Activated CD4-positive, alpha-beta memory T cell treated with anti-CD3 and anti-CD28 coated beads for 36 hours (primary cell): ENCODE measurements at regions of chr12 and their contacts with region 1.

Region 1: GRCh38 chr12:52069327-52070184 is at the start of gene ATG101:
- DNase-seq: peak; percentile 91
- H3K4me3 Mint-ChIP-seq: peak within 1 kb of the TSS; percentile 91
- H3K27ac Mint-ChIP-seq: peak within 1 kb of the TSS; percentile 98
- H3K4me1 Mint-ChIP-seq: peaks cover 47% of the 10 kb centered on the region
- H3K27me3 Mint-ChIP-seq: no peaks in the 10 kb centered on the region
- total RNA-seq, gene ATG101: 35.7 to 38.0 TPM

Region 2: GRCh38 chr12:52013626-52014310 is 55.8 kb before region 1 on chr12:
- CTCF ChIA-PET with region 1: no interaction called
- POLR2A ChIA-PET with region 1: no interaction called
- intact Hi-C with region 1: no loop called
- DNase-seq: no peak
- H3K4me3 Mint-ChIP-seq: no peak overlapping the region
- H3K27ac Mint-ChIP-seq: no peak overlapping the region
- H3K4me1 Mint-ChIP-seq: no peaks in the 10 kb centered on the region
- H3K27me3 Mint-ChIP-seq: no peaks in the 10 kb centered on the region

Region 3: GRCh38 chr12:52032804-52033502 is 36.6 kb before region 1 on chr12:
- CTCF ChIA-PET with region 1: interaction called, 407 read pairs
- POLR2A ChIA-PET with region 1: interaction called, 6 read pairs
- intact Hi-C with region 1: loop called (anchors 1 kb)
- DNase-seq: peak; percentile 96
- H3K4me3 Mint-ChIP-seq: peak overlapping the region; percentile 71
- H3K27ac Mint-ChIP-seq: peak overlapping the region; percentile 70
- H3K4me1 Mint-ChIP-seq: peaks cover 37% of the 10 kb centered on the region
- H3K27me3 Mint-ChIP-seq: no peaks in the 10 kb centered on the region

Region 4: DNA sequence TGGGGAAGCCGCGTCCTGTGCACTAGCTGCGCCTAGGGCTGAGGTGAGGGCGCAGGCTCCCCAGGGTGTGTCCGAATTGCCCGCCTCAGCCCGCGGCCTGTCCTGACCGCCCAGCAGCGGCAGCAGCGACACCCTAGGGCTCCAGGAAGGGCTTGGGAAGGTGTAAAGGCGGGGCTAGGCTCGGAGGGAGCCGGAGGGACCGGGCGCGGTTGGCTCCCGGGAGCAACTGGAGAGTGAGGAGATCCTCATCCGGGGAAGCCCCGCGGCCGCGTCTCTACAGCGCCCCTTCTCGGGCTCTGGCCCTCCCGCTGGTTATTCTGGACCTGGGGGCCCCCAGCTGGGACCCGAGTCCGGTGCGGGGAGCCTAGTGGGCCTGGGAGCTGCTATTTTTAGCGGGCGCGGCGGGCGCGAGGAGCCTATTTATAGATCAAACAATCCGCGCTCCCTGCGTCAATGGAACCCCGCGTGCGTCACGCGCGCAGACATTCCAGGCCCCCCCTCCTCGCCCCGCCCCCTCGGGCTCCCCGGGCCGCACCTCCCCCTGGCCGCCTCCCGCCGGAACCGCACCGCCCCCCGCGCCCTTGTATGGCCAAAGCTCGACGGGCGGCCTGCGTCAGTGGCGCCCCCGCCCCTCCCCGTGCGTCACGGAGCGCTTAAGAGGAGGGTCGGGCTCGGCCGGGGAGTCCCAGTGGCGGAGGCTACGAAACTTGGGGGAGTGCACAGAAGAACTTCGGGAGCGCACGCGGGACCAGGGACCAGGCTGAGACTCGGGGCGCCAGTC is 18.6 kb before region 1 on chr12 and contains the start of gene NR4A1:
- CTCF ChIA-PET with region 1: interaction called, 35 read pairs
- POLR2A ChIA-PET with region 1: interaction called, 19 read pairs
- intact Hi-C with region 1: loop called (anchors 1 kb)
- DNase-seq: peak; percentile 99
- H3K4me3 Mint-ChIP-seq: peak within 1 kb of the TSS; percentile 88
- H3K27ac Mint-ChIP-seq: peak within 1 kb of the TSS; percentile 91
- H3K4me1 Mint-ChIP-seq: peaks cover 27% of the 10 kb centered on the region
- H3K27me3 Mint-ChIP-seq: no peaks in the 10 kb centered on the region
- total RNA-seq, gene NR4A1: 64.2 to 68.2 TPM

Region 5: GRCh38 chr12:52058631-52059361 is 10.8 kb before region 1 on chr12:
- CTCF ChIA-PET with region 1: interaction called, 35 read pairs
- POLR2A ChIA-PET with region 1: interaction called, 4 read pairs
- intact Hi-C with region 1: no loop called
- DNase-seq: no peak
- H3K4me3 Mint-ChIP-seq: no peak overlapping the region
- H3K27ac Mint-ChIP-seq: no peak overlapping the region
- H3K4me1 Mint-ChIP-seq: no peaks in the 10 kb centered on the region
- H3K27me3 Mint-ChIP-seq: no peaks in the 10 kb centered on the region

Region 6: GRCh38 chr12:52082988-52083637 is 13.6 kb after region 1 on chr12:
- CTCF ChIA-PET with region 1: interaction called, 38 read pairs
- POLR2A ChIA-PET with region 1: no interaction called
- intact Hi-C with region 1: no loop called
- DNase-seq: peak; percentile 74
- H3K4me3 Mint-ChIP-seq: no peak overlapping the region
- H3K27ac Mint-ChIP-seq: no peak overlapping the region
- H3K4me1 Mint-ChIP-seq: peaks cover 4% of the 10 kb centered on the region
- H3K27me3 Mint-ChIP-seq: no peaks in the 10 kb centered on the region

Region 7: GRCh38 chr12:52093346-52093745 is 23.8 kb after region 1 on chr12:
- CTCF ChIA-PET with region 1: no interaction called
- POLR2A ChIA-PET with region 1: no interaction called
- intact Hi-C with region 1: no loop called
- DNase-seq: no peak
- H3K4me3 Mint-ChIP-seq: no peak overlapping the region
- H3K27ac Mint-ChIP-seq: no peak overlapping the region
- H3K4me1 Mint-ChIP-seq: no peaks in the 10 kb centered on the region
- H3K27me3 Mint-ChIP-seq: peaks cover 46% of the 10 kb centered on the region

Region 8: DNA sequence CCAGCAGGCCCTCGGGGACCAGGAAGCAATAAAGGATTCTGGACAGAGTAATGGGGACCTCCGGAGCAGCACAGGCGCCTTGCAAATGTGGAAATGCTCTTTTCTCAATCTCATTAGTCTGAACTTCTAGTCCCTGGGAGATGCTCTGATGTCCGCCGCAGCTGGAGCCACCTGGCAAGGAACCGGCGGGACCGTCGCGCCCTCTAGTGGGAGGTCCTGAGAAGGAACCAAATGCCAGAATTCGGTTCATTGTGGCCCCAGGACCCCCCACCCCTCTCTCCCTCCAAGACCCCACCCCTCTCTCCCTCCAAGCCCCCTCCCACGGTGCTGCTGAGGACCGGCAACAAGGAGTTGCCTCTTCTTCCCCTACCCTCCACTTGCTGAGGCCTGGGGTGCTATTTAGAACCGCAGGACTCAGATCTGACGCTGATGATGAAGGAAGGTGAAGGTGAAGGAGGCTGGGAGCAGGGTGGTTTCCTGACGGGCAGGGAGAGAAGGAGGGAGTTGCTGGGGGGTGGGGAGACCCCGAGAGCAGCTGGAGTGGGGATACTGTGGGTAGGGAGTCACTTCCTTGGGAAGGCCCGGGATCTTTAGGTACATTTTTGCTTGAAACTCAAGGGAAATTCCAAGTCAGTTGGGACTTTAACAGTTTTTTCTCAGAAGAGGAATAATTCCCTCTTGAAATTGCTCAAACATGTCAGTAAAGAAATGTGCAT is 52.4 kb after region 1 on chr12:
- CTCF ChIA-PET with region 1: interaction called, 5 read pairs
- POLR2A ChIA-PET with region 1: no interaction called
- intact Hi-C with region 1: loop called (anchors 5 kb)
- DNase-seq: peak; percentile 77
- H3K4me3 Mint-ChIP-seq: no peak overlapping the region
- H3K27ac Mint-ChIP-seq: no peak overlapping the region
- H3K4me1 Mint-ChIP-seq: peaks cover 12% of the 10 kb centered on the region
- H3K27me3 Mint-ChIP-seq: peaks cover 4% of the 10 kb centered on the region